HepG2 (cell line): ENCODE measurements at regions of chr1 and their contacts with region 1.

Region 1: DNA sequence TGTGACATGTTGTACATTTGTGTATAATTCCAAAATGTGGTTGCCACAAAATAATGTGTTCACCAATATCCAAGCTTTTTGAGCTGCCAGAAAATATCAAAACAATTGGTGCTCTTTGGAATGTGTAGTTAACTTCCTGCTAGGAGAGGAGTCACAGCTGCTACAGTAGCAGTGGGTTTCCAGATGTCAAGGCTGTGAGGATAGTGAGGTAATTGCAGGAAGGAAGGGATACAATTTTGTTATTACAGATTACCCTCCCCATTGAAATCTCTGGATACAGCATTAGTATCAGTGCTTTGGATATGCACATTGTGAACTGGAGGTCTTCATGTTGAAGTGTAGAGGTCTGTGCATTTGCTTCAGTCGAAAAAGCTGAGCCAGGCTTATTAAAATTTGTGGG is 253.2 kb downstream of the PTPRC start:
- DNase-seq: no peak
- ATAC-seq: no peak
- H3K4me3 ChIP-seq: no peak overlapping the region
- H3K27ac ChIP-seq: no peak overlapping the region
- H3K4me1 ChIP-seq: no peaks in the 10 kb centered on the region
- H3K27me3 ChIP-seq: no peaks in the 10 kb centered on the region
- CTCF ChIP-seq: no peak
- EP300 ChIP-seq: no peak
- POLR2A ChIP-seq: no peak
- RAD21 ChIP-seq: no peak

Region 2: GRCh38 chr1:198238121-198238520 is 653.9 kb before region 1 on chr1:
- CTCF ChIA-PET with region 1: no interaction called
- POLR2A ChIA-PET with region 1: no interaction called
- in situ Hi-C with region 1: no loop called
- intact Hi-C with region 1: no loop called
- DNase-seq: no peak
- ATAC-seq: no peak
- H3K4me3 ChIP-seq: no peak overlapping the region
- H3K27ac ChIP-seq: no peak overlapping the region
- H3K4me1 ChIP-seq: no peaks in the 10 kb centered on the region
- H3K27me3 ChIP-seq: no peaks in the 10 kb centered on the region
- CTCF ChIP-seq: no peak
- EP300 ChIP-seq: no peak
- POLR2A ChIP-seq: no peak
- RAD21 ChIP-seq: no peak

Region 3: GRCh38 chr1:198937231-198938031 is 45.4 kb after region 1 on chr1:
- CTCF ChIA-PET with region 1: no interaction called
- POLR2A ChIA-PET with region 1: no interaction called
- in situ Hi-C with region 1: no loop called
- intact Hi-C with region 1: loop called (anchors 2 kb)
- DNase-seq: peak; percentile 70
- ATAC-seq: no peak
- H3K4me3 ChIP-seq: peak overlapping the region; percentile 46 to 57 (median 56)
- H3K27ac ChIP-seq: no peak overlapping the region
- H3K4me1 ChIP-seq: peaks cover 16% of the 10 kb centered on the region
- H3K27me3 ChIP-seq: no peaks in the 10 kb centered on the region
- CTCF ChIP-seq: no peak
- EP300 ChIP-seq: no peak
- POLR2A ChIP-seq: peak in 1 of 2 experiments; percentile 36; a peak in 1 of 4 replicates
- RAD21 ChIP-seq: no peak